Sigmoid colon (tissue), 7 donors: ENCODE measurements at regions of chr5 and their contacts with region 1.

Region 1: GRCh38 chr5:32092938-32093812 is 80.9 kb downstream of the GOLPH3 start:
- DNase-seq: peak; percentile 83
- H3K4me3 ChIP-seq: no peak overlapping the region
- H3K27ac ChIP-seq: no peak overlapping the region
- H3K4me1 ChIP-seq: peaks cover 0 to 19% (median 17%) of the 10 kb centered on the region in 4 donors
- H3K27me3 ChIP-seq: no peaks in the 10 kb centered on the region
- CTCF ChIP-seq: peak; percentile 65 to 74 (median 66)
- EP300 ChIP-seq: no peak
- POLR2A ChIP-seq: no peak

Region 2: DNA sequence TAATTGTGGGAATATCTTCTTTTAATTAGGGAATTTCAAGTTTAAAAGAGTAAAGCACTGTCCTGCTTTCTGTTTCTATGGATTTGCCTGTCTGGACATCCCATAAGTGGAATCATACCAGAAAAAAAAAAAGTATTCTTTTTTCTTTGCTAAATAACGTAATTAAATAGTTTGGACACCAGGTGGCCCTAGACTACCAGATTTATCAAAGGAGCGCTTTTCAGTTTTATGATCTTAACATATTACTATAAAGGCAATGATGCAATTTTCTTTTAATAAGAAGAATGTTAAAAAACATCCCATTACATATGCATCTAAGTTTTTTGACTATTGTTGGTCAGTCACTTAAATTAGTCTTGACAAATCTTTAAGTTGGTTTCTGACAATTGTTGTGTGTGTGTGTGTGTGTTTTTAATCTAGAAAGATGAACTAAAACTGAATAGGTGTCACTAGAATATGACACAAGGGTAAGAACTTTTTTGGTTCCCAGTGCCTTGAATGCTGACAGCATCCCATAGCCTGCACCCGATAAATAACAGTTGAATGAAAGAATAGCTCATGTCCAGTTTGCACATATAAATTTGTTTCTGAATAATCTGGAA is 511.6 kb before region 1 on chr5:
- intact Hi-C with region 1: loop called (anchors 5 kb)
- DNase-seq: no peak
- H3K4me3 ChIP-seq: no peak overlapping the region
- H3K27ac ChIP-seq: no peak overlapping the region
- H3K4me1 ChIP-seq: no peaks in the 10 kb centered on the region
- H3K27me3 ChIP-seq: no peaks in the 10 kb centered on the region
- CTCF ChIP-seq: peak in 2 of 4 experiments; percentile 23
- EP300 ChIP-seq: no peak
- POLR2A ChIP-seq: no peak

Region 3: DNA sequence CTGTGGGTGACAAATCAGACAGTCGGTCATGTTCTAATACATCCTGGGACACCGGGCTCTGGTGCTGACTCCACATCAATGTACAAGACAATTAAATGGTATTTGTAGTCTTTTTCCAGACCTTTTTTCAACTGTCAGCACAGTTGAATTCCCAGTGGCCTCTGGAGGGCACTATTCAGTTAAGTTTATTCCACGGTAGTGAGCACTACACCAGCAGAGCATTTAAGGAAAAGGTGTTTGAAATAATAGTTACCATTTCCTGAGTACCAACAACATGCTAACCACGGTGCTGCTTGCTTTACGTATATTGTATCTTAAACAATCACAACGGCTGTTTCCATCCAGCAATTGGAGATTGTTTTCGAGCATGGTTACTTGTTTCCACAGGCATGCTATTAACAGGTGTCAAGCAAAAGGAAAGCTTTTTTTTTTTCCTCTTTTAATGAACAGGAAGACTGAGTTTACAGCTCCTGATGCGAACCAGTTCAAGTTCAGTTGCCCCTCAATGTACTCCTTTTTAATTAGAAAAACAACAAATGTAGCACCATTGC is 267.6 kb before region 1 on chr5:
- intact Hi-C with region 1: loop called (anchors 5 kb)
- DNase-seq: peak; percentile 68
- H3K4me3 ChIP-seq: no peak overlapping the region
- H3K27ac ChIP-seq: no peak overlapping the region
- H3K4me1 ChIP-seq: no peaks in the 10 kb centered on the region
- H3K27me3 ChIP-seq: peaks cover 0 to 4% (median 0%) of the 10 kb centered on the region in 3 donors
- CTCF ChIP-seq: peak; percentile 25 to 59 (median 46)
- EP300 ChIP-seq: no peak
- POLR2A ChIP-seq: no peak